ENCODE measurements at regions of chr3 and their contacts with region 1.

Region 1: DNA sequence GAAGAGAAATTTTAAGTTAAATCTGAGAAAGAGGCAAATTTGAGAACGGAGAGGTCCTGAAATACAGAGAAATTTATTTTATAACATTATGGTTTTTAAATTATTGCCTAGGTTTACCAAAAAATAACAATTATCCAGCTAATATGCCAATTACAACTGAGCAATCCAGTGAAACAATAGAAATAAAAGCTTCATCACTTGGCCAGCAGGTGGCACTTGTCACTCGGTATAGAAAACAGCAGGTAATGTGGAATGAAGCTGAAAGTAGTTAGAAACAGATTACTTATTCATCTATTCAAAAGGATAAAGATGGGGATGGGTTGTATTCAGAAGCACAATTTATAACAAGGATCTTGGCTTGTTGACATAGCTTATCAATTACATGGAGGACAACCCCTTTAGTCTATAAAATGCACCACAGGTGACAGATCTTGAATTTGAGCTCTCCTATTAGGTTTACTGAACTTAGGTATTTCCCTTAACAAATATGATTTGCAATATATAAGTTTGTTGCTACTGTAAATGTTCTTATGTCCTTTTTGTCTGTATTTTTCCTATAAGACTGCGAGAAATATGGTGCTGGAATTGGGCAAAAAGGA is 70.1 kb upstream of the GUCA1C start:
- DNase-seq: peak; percentile 59
- ATAC-seq: no peak
- H3K4me3 Mint-ChIP-seq: no peak overlapping the region
- H3K27ac Mint-ChIP-seq: no peak overlapping the region
- H3K4me1 Mint-ChIP-seq: no peaks in the 10 kb centered on the region
- H3K27me3 Mint-ChIP-seq: no peaks in the 10 kb centered on the region

Region 2: GRCh38 chr3:109071350-109072142 is 47.8 kb after region 1 on chr3:
- CTCF ChIA-PET with region 1: interaction called, 11 read pairs
- POLR2A ChIA-PET with region 1: no interaction called
- DNase-seq: no peak
- ATAC-seq: no peak
- H3K4me3 Mint-ChIP-seq: no peak overlapping the region
- H3K27ac Mint-ChIP-seq: no peak overlapping the region
- H3K4me1 Mint-ChIP-seq: peaks cover 8% of the 10 kb centered on the region
- H3K27me3 Mint-ChIP-seq: peaks cover 27% of the 10 kb centered on the region

Region 3: DNA sequence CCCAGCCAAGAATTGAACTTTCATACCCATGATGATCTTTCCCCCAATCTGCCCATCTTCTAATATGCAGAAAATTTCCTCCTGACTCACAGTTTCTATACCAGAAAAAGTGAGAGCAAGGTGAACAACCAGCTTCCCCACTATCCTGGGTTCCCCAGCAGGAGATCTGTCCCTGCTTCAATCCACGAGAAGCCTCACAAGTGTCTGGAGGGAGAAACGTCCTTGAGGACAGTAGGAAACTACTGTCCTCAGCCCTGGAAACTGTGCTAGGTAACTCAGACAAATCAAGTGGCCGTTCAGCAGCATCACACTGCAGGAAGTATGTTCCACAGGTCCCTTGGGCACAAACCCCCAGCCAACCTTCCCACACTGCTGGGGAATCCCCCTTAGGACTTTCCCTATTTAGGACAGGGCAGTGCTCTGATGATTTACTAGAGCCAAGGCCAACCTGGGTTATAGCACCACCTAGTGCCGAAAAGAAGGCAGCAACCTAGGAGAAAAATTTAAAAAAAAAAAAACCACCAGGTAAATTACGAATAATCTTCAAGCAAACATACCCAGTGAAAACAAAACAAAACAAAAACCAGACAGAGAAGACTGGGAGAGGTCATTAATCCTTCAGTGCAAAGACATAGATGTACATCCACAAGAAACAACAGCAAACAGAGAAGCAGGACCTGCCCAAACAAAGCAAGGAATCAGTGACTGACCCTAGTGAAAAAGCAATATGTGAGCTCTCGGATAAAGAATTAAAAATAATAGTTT is 58.2 kb after region 1 on chr3:
- CTCF ChIA-PET with region 1: interaction called, 39 read pairs
- POLR2A ChIA-PET with region 1: no interaction called
- DNase-seq: peak; percentile 51
- ATAC-seq: peak; percentile 71
- H3K4me3 Mint-ChIP-seq: no peak overlapping the region
- H3K27ac Mint-ChIP-seq: no peak overlapping the region
- H3K4me1 Mint-ChIP-seq: no peaks in the 10 kb centered on the region
- H3K27me3 Mint-ChIP-seq: peaks cover 16% of the 10 kb centered on the region

Region 4: GRCh38 chr3:109095166-109095565 is 71.4 kb after region 1 on chr3:
- CTCF ChIA-PET with region 1: interaction called, 13 read pairs
- POLR2A ChIA-PET with region 1: no interaction called
- DNase-seq: no peak
- ATAC-seq: no peak
- H3K4me3 Mint-ChIP-seq: no peak overlapping the region
- H3K27ac Mint-ChIP-seq: no peak overlapping the region
- H3K4me1 Mint-ChIP-seq: no peaks in the 10 kb centered on the region
- H3K27me3 Mint-ChIP-seq: peaks cover 18% of the 10 kb centered on the region

Region 5: GRCh38 chr3:109382583-109382982 is 358.8 kb after region 1 on chr3:
- CTCF ChIA-PET with region 1: no interaction called
- POLR2A ChIA-PET with region 1: no interaction called
- DNase-seq: no peak
- ATAC-seq: no peak
- H3K4me3 Mint-ChIP-seq: no peak overlapping the region
- H3K27ac Mint-ChIP-seq: no peak overlapping the region
- H3K4me1 Mint-ChIP-seq: no peaks in the 10 kb centered on the region
- H3K27me3 Mint-ChIP-seq: no peaks in the 10 kb centered on the region

Measured in activated CD8-positive, alpha-beta T cell treated with anti-CD3 and anti-CD28 coated beads, Interleukin-2, amount 10 ng/mL, durations not matched to agents 7 days and 5 days (primary cell).